GM23248 (cell line): ENCODE measurements at regions of chrX and their contacts with region 1.

Region 1: DNA sequence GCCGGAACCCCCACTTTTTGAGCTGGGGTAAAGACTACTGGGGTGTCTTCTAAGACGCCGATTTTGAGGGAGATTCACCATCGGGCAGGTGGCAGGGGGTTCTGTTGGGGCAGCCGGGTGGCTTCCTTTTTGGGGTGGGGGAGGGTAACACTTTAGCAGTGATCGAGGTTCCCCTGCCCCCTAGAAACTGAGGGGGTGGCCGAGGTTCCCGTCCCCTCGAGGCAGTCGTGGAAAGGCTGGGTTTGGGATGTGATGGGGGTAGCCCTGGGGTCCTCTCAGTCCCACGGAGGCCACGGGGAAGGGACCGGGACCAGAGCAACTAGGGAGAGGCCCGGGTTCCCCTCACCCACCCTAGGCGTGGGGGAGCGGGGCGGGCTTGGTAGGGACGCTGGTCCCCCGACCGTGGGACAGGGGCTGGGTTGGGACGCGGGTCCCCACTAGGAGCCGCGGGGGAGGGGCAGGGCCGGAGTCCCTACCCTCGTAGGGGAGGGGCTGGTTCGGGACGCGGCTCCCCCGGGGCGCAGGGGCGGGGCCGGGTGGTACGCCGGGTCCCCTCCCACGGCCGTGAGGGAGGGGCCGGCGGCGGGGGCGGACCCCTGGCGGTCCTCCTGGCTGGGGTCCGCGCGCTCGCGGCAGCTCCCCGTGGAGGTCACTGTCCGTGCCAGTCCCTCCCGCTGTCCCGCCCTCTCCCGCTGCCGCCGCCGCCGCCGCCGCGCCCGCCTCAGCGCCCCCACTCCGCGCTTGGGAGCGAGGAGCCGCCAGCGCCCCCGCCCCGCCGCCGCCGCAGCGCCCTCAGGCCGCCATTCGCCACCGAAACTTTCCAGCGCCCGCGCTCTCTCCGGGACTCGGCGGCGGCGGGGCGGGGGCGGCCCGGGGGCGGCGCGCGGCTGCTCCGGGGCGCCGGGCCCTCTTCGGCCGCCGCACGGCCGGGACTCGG is at the start of gene TBL1X:
- DNase-seq: peak; percentile 63
- H3K4me3 ChIP-seq: peak within 1 kb of the TSS; percentile 79
- H3K27ac ChIP-seq: peak within 1 kb of the TSS; percentile 84
- H3K4me1 ChIP-seq: no peaks in the 10 kb centered on the region
- H3K27me3 ChIP-seq: no peaks in the 10 kb centered on the region
- total RNA-seq, gene TBL1X: 26.4 and 26.8 TPM in 2 replicates

Region 2: DNA sequence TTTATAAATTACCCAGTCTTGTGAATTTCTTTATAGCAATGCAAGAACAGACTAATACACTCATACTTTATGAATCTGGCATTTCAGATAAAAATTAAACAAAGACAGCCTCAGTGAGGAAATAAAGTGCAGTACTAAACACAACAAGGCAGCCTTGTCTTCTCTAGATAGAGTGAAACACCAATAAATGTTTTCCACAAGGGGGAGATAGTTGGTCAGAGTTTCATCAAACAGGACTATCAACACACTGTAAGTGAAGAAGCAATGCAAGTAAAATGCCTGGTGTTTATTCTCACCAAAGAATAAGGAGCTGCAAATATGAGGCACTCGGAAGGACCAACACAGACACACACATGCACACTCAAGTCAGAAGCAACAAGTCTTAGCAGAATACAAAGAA is 493.6 kb before region 1 on chrX:
- in situ Hi-C with region 1: loop called (anchors 25 kb)
- DNase-seq: peak; percentile 55
- H3K4me3 ChIP-seq: no peak overlapping the region
- H3K27ac ChIP-seq: no peak overlapping the region
- H3K4me1 ChIP-seq: peaks cover 3% of the 10 kb centered on the region; the same call in 1 of the 2 replicates
- H3K27me3 ChIP-seq: no peaks in the 10 kb centered on the region

Region 3: GRCh38 chrX:9291629-9292028 is 173.1 kb before region 1 on chrX:
- in situ Hi-C with region 1: no loop called
- DNase-seq: no peak
- H3K4me3 ChIP-seq: no peak overlapping the region
- H3K27ac ChIP-seq: no peak overlapping the region
- H3K4me1 ChIP-seq: no peaks in the 10 kb centered on the region
- H3K27me3 ChIP-seq: no peaks in the 10 kb centered on the region